Common myeloid progenitor, CD34-positive (primary cell): ENCODE measurements at regions of chr2 and their contacts with region 1.

Region 1: GRCh38 chr2:101012706-101013181 is 10.7 kb downstream of the RPL31 start:
- DNase-seq: peak; percentile 42 to 68 (median 50)
- H3K4me3 ChIP-seq: no peak overlapping the region
- H3K27ac ChIP-seq: no peak overlapping the region
- H3K4me1 ChIP-seq: no peaks in the 10 kb centered on the region
- H3K27me3 ChIP-seq: no peaks in the 10 kb centered on the region

Region 2: GRCh38 chr2:101001691-101002561 is 10.8 kb before region 1 on chr2 and contains the start of gene RPL31:
- CTCF ChIA-PET with region 1: interaction called, 13 read pairs
- POLR2A ChIA-PET with region 1: no interaction called
- DNase-seq: peak; percentile 97 to 99 (median 99)
- H3K4me3 ChIP-seq: peak within 1 kb of the TSS; percentile 92 to 98 (median 97)
- H3K27ac ChIP-seq: peak within 1 kb of the TSS; percentile 89 to 95
- H3K4me1 ChIP-seq: peaks cover 12 to 26% (median 19%) of the 10 kb centered on the region in 4 experiments
- H3K27me3 ChIP-seq: peaks cover 0 to 2% (median 0%) of the 10 kb centered on the region in 5 experiments

Region 3: DNA sequence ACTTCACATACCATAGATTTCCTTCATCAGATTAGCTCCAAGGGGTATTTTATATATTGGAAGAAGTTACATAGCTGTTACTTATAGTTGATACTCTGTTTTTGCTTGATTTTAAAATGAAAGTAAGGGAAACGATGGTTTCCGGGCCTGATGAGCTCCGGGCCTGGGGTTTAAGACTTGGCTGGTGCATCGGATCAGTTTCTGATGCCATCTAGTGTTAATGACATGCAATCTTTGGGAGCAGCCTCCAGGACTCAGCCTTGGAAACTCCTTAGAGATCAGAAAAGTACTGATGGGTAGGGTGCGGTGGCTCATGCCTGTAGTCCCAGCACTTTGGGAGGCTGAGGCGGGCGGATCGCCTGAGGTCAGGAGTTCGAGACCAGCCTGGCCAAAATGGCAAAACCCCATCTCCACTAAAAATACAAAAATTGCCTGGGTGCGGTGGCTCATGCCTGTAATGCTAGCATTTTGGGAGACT is 192.8 kb after region 1 on chr2:
- CTCF ChIA-PET with region 1: interaction called, 20 read pairs
- POLR2A ChIA-PET with region 1: no interaction called
- DNase-seq: peak; percentile 71 to 79 (median 76)
- H3K4me3 ChIP-seq: peak overlapping the region in 4 of 7 experiments; percentile 13 to 68 (median 43)
- H3K27ac ChIP-seq: peak overlapping the region in 1 of 2 experiments; percentile 34
- H3K4me1 ChIP-seq: peaks cover 0 to 5% (median 3%) of the 10 kb centered on the region in 4 experiments
- H3K27me3 ChIP-seq: no peaks in the 10 kb centered on the region